Ovary (tissue), 10 donors: ENCODE measurements at regions of chr1 and their contacts with region 1.

Region 1: DNA sequence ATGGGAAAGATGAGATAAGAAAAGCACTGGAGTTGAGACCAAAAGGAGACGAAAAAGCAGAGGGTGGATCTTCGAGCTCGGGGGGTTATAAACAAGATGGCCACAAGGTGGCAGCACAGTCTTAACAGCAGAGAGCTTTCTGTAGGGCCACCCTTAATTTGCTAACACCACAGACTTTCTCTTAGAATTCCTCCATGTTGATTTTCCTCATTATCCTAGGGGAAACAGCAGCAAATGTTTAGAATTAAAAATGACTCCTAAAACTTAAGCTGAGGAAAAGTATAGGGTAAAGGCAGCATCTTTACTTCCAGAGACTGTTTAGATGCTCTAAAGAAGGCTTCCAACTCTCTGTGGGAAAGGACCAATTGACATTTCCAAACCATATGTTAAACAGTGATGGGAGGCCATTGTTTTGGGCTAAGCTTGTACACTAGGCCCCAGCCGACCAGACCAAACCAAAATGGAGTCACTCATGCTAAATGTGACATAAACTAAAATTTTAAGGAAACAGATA is 2.5 kb upstream of the APOBEC4 start:
- DNase-seq: peak; percentile 72 to 89 (median 86)
- H3K4me3 ChIP-seq: no peak overlapping the region
- H3K27ac ChIP-seq: no peak overlapping the region
- H3K4me1 ChIP-seq: no peaks in the 10 kb centered on the region
- H3K27me3 ChIP-seq: no peaks in the 10 kb centered on the region
- CTCF ChIP-seq: peak; percentile 63 to 90 (median 76)
- EP300 ChIP-seq: no peak
- POLR2A ChIP-seq: no peak

Region 2: DNA sequence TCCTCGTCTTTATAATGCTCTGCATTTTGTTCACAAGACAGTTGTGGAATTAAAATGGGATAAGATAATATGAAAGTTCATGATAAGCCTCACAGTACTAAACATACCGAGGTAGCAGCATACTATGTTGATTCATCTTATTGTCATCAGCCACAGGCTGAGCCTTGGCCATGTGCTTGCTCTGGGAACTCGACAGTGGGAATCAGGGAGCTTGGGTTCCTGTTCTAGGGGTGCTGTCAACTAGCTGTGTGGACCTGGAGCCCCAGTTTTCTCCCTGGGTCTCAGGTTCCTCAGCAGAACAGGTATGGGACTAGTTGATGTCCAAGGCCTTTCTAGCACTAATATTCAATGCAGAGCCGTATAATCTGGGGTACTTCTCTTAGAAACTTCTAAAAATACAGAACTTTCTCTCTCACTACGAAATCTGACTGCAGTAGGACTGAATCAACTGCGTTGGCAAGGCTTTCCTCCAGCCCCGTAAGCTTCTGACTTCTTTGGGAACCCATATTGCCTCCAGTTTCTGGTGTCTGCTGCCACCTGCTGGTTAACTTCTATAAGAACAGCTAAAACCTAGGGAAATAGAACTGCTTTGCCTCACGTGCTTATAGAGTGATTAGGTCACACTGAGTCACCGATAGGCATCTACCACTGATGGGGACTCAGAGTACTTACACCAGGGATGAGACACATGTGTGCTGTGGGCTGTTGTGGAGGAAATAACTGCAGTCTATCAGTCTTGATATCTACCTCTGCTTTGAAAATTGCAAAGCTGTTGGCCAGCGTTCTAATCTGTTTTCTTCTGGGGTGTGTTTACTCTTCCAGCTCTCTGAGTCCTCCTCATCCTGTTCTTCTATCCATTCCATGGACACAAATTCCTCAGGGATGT is 260.2 kb after region 1 on chr1:
- intact Hi-C with region 1: loop called (anchors 2 to 5 kb)
- DNase-seq: peak; percentile 71 to 84 (median 75)
- H3K4me3 ChIP-seq: no peak overlapping the region
- H3K27ac ChIP-seq: peak overlapping the region; percentile 5 to 66
- H3K4me1 ChIP-seq: peaks cover 2% of the 10 kb centered on the region
- H3K27me3 ChIP-seq: no peaks in the 10 kb centered on the region
- CTCF ChIP-seq: peak; percentile 79 to 95 (median 91)
- EP300 ChIP-seq: no peak
- POLR2A ChIP-seq: no peak